ENCODE measurements at regions of chr1 and their contacts with region 1.

Region 1: DNA sequence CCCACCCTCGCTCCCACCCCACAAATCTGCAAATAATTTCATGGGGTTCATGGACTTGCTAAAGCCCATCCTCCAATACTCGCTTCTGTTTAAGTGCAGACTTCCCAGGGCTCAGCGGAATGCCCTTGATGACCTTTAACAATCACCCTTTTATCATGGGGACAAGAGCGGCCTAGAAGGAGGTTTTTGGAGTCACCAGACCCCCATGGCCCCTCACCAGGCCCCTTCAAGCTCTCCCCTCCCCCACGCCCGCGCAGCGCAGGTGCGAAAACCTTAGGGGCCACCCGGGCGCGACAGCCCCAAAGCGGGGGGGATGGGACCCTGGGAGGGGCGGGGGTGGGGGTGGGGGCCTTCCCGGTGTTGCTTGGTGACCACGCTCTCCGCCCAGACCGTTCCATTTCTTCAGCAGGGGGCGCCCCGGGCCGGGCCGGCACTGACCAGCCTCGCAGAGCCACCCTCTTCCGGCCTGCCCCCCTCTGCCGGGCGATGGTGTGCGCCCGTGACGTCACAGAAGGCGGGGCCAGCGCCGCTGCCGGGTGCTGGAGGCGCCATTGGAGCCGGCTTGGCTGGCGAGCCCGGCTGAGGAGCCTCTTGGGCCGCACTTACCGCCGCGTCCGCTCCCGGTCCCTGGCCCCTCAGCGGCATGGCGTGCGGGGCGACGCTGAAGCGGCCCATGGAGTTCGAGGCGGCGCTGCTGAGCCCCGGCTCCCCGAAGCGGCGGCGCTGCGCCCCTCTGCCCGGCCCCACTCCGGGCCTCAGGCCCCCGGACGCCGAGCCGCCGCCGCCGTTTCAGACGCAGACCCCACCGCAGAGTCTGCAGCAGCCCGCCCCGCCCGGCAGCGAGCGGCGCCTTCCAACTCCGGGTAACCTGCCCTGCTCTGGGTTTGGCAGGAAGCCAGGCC is at the start of gene AKIRIN1:
- DNase-seq: peak; percentile 95
- H3K4me3 ChIP-seq: peak within 1 kb of the TSS; percentile 93
- H3K27ac ChIP-seq: peak within 1 kb of the TSS; percentile 57
- H3K4me1 ChIP-seq: peaks cover 19% of the 10 kb centered on the region
- CTCF ChIP-seq: no peak
- total RNA-seq, gene AKIRIN1: 35.0 and 40.0 TPM in 2 replicates

Region 2: GRCh38 chr1:38433084-38433722 is 557.8 kb before region 1 on chr1:
- CTCF ChIA-PET with region 1: no interaction called
- POLR2A ChIA-PET with region 1: no interaction called
- intact Hi-C with region 1: no loop called
- DNase-seq: no peak
- H3K4me3 ChIP-seq: no peak overlapping the region
- H3K27ac ChIP-seq: no peak overlapping the region
- H3K4me1 ChIP-seq: peaks cover 18% of the 10 kb centered on the region
- CTCF ChIP-seq: no peak

Region 3: GRCh38 chr1:38873027-38873969 is 117.7 kb before region 1 on chr1 and contains the start of gene MYCBP:
- CTCF ChIA-PET with region 1: no interaction called
- POLR2A ChIA-PET with region 1: no interaction called
- intact Hi-C with region 1: loop called (anchors 1 kb)
- DNase-seq: peak; percentile 97
- H3K4me3 ChIP-seq: peak within 1 kb of the TSS; percentile 94
- H3K27ac ChIP-seq: peak within 1 kb of the TSS; percentile 29
- H3K4me1 ChIP-seq: peaks cover 19% of the 10 kb centered on the region
- CTCF ChIP-seq: no peak; the same call in 1 of the 2 replicates
- total RNA-seq, gene MYCBP: 21.5 and 25.2 TPM in 2 replicates

Region 4: GRCh38 chr1:39091845-39092645 is 101.1 kb after region 1 on chr1:
- CTCF ChIA-PET with region 1: no interaction called
- POLR2A ChIA-PET with region 1: no interaction called
- intact Hi-C with region 1: loop called (anchors 5 kb)
- DNase-seq: peak; percentile 77
- H3K4me3 ChIP-seq: no peak overlapping the region
- H3K27ac ChIP-seq: no peak overlapping the region
- H3K4me1 ChIP-seq: no peaks in the 10 kb centered on the region
- CTCF ChIP-seq: peak; percentile 92

Measured in OCI-LY7 (cell line).